Activated CD4-positive, alpha-beta memory T cell treated with anti-CD3 and anti-CD28 coated beads for 36 hours (primary cell): ENCODE measurements at regions of chr6 and their contacts with region 1.

Region 1: DNA sequence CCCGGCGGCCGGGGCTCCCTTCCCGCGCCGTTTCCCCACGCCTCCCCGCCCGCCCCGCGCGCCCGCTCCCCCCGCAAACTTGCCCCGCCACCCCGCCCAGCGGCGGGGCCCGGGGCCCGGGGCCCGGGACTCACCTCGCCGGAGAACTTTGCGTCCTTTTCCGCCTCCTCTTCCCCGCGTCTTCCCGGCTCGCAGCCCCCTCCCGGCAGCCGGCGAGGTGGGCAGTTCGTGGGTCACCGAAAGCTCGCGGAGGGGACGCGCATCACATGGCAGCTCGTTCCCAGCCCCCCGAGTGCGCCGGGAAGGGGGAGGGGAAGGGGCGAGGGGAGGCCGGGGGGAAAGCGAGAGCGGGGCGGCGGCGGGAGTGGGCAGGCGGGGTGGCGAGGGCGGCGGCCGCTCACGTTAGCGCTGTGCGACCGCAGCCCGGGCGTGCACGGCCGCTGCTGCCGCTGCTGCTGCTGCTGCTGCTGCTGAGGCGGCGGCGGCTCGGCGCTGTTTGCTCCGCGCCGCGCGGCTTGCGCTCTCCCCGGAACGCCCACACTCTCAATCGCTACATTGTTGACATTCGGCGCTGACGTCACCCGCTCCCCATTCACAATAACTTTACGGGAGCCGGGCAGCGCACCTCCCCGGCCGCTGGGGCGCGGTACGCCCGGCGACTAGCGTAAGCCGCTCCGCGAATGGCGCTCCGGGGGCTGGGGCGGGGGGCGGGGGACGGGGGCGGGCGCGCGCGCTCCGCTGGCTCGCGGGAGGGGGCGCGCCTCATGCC is at the start of gene BACH2:
- DNase-seq: peak; percentile 97
- H3K4me3 Mint-ChIP-seq: peak within 1 kb of the TSS; percentile 79
- H3K27ac Mint-ChIP-seq: peak within 1 kb of the TSS; percentile 86
- H3K4me1 Mint-ChIP-seq: peaks cover 32% of the 10 kb centered on the region
- H3K27me3 Mint-ChIP-seq: peaks cover 9% of the 10 kb centered on the region
- total RNA-seq, gene BACH2: 49.2 to 55.4 TPM

Region 2: GRCh38 chr6:90184334-90185298 is 111.9 kb before region 1 on chr6:
- CTCF ChIA-PET with region 1: no interaction called
- POLR2A ChIA-PET with region 1: no interaction called
- intact Hi-C with region 1: no loop called
- DNase-seq: no peak
- H3K4me3 Mint-ChIP-seq: no peak overlapping the region
- H3K27ac Mint-ChIP-seq: no peak overlapping the region
- H3K4me1 Mint-ChIP-seq: peaks cover 52% of the 10 kb centered on the region
- H3K27me3 Mint-ChIP-seq: no peaks in the 10 kb centered on the region

Region 3: DNA sequence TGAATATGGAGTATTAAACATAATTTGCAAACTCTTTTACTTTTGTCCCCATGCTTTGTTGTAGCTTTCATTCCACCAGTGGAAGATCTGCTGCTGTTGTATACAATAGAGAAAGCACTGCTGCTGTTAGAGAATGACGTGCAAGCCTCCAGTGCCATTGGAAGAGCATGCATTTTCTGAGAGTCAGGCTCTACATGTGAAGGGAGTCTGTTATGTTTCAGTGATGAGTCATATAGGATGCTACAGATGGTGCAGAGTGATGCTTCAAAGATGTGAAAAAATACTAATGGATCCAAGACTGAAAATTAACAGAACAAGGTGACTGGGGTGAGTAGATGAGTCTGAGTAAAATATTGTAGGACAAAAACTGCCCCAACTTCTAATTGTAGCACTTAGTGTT is 22.5 kb after region 1 on chr6:
- CTCF ChIA-PET with region 1: interaction called, 3 read pairs
- POLR2A ChIA-PET with region 1: interaction called, 4 read pairs
- intact Hi-C with region 1: loop called (anchors 1 kb)
- DNase-seq: peak; percentile 51
- H3K4me3 Mint-ChIP-seq: no peak overlapping the region
- H3K27ac Mint-ChIP-seq: peak overlapping the region; percentile 59
- H3K4me1 Mint-ChIP-seq: peaks cover 29% of the 10 kb centered on the region
- H3K27me3 Mint-ChIP-seq: peaks cover 3% of the 10 kb centered on the region

Region 4: DNA sequence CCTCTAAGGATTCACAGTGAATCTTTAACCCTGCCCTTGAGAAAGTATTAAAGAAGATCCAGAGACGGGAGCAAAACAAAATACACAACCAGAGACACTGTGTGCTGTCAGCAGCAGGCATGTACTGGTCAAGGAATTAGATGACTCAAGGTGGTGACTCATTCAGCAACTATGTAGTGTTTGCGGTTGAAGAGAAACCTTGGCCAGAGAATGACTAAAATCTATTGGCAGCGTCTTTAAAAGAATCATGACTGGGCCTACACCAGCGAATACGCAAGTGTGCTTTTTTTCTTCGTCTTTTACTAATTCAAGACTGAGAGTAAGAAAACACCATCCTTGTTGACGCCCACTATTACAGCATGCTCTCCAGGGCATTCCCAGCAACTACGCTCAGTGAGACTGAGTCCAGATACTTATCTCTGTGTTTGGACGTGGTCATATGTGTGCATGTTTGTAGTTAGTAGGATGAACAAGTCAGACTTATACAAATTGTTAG is 72.5 kb after region 1 on chr6:
- CTCF ChIA-PET with region 1: interaction called, 7 read pairs
- POLR2A ChIA-PET with region 1: interaction called, 5 read pairs
- intact Hi-C with region 1: loop called (anchors 2 kb)
- DNase-seq: peak; percentile 63
- H3K4me3 Mint-ChIP-seq: no peak overlapping the region
- H3K27ac Mint-ChIP-seq: peak overlapping the region; percentile 35
- H3K4me1 Mint-ChIP-seq: peaks cover 20% of the 10 kb centered on the region
- H3K27me3 Mint-ChIP-seq: no peaks in the 10 kb centered on the region